ENCODE measurements at regions of chr4 and their contacts with region 1.

Region 1: GRCh38 chr4:183444214-183445066 is at the start of gene CDKN2AIP:
- DNase-seq: peak; percentile 95
- H3K4me3 ChIP-seq: peak within 1 kb of the TSS; percentile 98
- H3K27ac ChIP-seq: peak within 1 kb of the TSS; percentile 93
- H3K4me1 ChIP-seq: peaks cover 35% of the 10 kb centered on the region
- CTCF ChIP-seq: no peak; the same call in 1 of the 2 replicates
- total RNA-seq, gene CDKN2AIP: 32.3 and 36.3 TPM in 2 replicates

Region 2: GRCh38 chr4:182917182-182918043 is 527.0 kb before region 1 on chr4 and contains the start of gene DCTD:
- CTCF ChIA-PET with region 1: no interaction called
- POLR2A ChIA-PET with region 1: no interaction called
- intact Hi-C with region 1: loop called (anchors 1 kb)
- DNase-seq: peak; percentile 93
- H3K4me3 ChIP-seq: peak within 1 kb of the TSS; percentile 85
- H3K27ac ChIP-seq: peak within 1 kb of the TSS; percentile 88
- H3K4me1 ChIP-seq: peaks cover 25% of the 10 kb centered on the region
- CTCF ChIP-seq: peak; percentile 75
- total RNA-seq, gene DCTD: 37.8 and 42.5 TPM in 2 replicates

Region 3: DNA sequence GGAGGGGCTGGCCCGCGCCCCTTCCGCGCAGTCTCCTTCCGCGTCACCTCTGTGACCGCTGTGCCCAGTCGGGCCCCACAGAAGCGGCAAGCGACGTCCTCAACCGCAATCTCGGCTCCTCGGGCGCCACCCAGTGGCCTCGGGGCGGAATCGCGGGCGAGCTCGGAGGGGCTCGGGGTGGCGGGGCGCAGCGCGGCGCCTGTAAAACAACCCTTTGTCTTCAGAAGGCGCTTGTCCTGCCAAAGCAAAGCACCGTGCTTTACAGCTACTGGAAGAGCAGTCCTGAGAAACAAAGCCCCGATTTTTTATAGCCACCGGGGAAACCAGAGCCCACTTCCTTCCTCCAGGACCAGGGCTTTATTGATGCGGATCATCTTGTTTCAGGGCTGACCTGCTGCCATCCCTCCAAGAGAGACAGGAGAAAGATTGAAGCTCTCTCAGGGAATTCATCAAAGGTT is 37.3 kb before region 1 on chr4:
- CTCF ChIA-PET with region 1: no interaction called
- POLR2A ChIA-PET with region 1: interaction called, 3 read pairs
- intact Hi-C with region 1: loop called (anchors 2 kb)
- DNase-seq: peak; percentile 83
- H3K4me3 ChIP-seq: peak overlapping the region; percentile 59
- H3K27ac ChIP-seq: no peak overlapping the region
- H3K4me1 ChIP-seq: peaks cover 14% of the 10 kb centered on the region
- CTCF ChIP-seq: peak; percentile 89

Region 4: DNA sequence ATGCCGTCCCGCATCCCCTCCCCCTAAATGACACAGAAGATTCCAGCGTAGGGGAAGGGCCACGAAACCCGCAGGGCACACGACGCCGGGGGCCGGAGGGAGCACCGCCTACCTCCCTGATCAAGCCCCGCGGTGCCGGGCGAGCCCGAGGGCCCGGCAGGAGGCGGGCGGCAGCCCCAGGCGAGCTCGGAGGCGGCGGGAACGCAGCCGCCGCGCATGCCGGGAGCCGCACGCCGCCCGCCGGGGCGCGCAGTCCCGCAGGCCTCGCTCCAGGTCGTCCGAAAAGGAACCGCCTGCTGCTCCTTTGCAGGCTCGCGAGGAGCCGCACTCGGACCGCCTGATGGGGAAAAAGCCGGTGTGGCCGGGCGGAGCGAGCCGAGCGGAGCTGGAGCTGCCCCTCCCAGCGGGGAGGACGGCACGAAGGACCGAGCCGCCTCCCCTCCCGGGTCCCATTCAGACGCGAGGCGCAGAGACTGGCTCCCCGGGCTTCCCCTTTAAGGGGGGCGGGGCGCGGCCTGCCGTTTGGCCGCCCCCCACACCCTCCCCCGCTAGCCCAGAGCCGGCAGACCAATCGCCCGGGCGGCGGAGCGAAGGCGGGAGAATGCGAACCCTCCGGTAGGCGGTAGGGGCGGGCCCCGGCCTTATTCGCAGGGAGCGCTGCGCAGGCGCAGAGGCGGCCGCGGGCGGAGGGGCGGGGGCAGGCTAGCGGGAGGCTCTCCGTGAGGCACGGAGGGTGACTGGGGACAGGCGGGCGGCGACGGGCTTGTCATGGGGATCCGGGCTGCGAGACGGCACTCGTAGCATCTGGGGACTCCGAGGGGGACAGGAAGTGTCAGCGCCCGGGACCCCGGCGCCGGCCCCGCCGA is 59.9 kb after region 1 on chr4:
- CTCF ChIA-PET with region 1: no interaction called
- POLR2A ChIA-PET with region 1: interaction called, 8 read pairs
- intact Hi-C with region 1: loop called (anchors 1 kb)
- DNase-seq: peak; percentile 98
- H3K4me3 ChIP-seq: peak overlapping the region; percentile 100
- H3K27ac ChIP-seq: peak overlapping the region; percentile 89
- H3K4me1 ChIP-seq: peaks cover 23% of the 10 kb centered on the region
- CTCF ChIP-seq: no peak

Region 5: GRCh38 chr4:183659029-183659871 is 214.8 kb after region 1 on chr4 and contains the starts of genes RWDD4 and TRAPPC11:
- CTCF ChIA-PET with region 1: no interaction called
- POLR2A ChIA-PET with region 1: no interaction called
- intact Hi-C with region 1: loop called (anchors 2 kb)
- DNase-seq: peak; percentile 96
- H3K4me3 ChIP-seq: peak within 1 kb of the TSS; percentile 77
- H3K27ac ChIP-seq: peak within 1 kb of the TSS; percentile 50
- H3K4me1 ChIP-seq: peaks cover 18% of the 10 kb centered on the region
- CTCF ChIP-seq: no peak
- total RNA-seq, gene RWDD4: 14.4 and 20.4 TPM in 2 replicates
- total RNA-seq, gene TRAPPC11: 27.8 and 35.9 TPM in 2 replicates

Region 6: DNA sequence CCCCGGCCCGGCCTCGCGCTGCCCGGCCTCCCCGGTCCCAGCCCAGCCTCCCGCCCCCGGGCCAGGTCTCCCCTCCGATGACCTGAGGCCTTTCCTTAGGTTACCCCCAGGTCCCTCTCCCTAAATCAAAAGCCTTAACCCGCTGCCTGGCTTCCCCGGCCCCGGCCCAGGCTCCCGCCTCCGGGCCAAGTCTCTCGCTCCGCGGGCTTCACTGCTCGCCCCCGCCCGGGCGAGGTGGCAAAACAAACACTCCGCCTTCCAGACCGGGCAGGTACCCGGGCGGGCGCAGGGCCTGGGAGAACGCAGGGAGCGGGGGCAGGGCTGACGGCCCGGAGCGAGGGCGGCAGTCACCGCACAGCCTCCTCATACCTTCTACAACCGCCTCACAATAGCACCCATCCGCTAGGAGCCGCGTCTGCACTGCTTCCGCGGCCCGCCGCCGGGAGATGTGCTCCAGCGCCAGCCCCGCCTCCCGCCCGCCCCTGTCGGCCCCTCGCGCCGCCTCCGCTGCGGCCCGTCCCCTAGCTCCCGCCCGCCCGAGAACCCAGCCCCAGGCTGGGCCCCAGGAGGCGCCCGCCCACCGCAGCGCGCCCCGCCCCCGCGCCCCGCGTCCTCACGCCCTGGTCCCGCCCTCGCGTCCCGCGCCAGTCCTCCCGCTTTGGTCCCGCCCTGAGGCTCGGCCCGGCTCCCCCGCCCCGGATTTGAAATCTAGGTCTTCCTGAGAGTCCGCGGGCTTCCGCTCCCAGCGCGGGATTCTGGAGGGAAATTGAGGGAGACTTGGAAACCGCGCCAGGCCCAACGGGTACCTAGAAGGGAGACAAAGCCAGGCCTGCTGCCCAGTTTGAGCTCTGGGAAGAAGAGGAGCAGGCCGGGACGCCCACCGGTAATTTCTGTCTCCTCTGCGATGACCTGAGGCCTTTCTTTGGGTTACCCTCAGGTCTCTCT is 1204.9 kb after region 1 on chr4 and contains the starts of genes CASP3 and PRIMPOL:
- CTCF ChIA-PET with region 1: no interaction called
- POLR2A ChIA-PET with region 1: no interaction called
- intact Hi-C with region 1: loop called (anchors 10 kb)
- DNase-seq: peak; percentile 96
- H3K4me3 ChIP-seq: peak within 1 kb of the TSS; percentile 93
- H3K27ac ChIP-seq: peak within 1 kb of the TSS; percentile 79
- H3K4me1 ChIP-seq: peaks cover 42% of the 10 kb centered on the region
- CTCF ChIP-seq: 0 out of 2 replicates have a peak, but pooled peaks have one; percentile 21
- total RNA-seq, gene CASP3: 25.8 and 29.5 TPM in 2 replicates
- total RNA-seq, gene PRIMPOL: 8.8 and 9.2 TPM in 2 replicates

Measured in OCI-LY7 (cell line).